ENCODE measurements at regions of chr4 and their contacts with region 1.

Region 1: GRCh38 chr4:170259631-170260153 is 169.9 kb upstream of the AADAT start:
- DNase-seq: peak; percentile 95
- H3K4me3 ChIP-seq: no peak overlapping the region
- H3K27ac ChIP-seq: no peak overlapping the region
- H3K4me1 ChIP-seq: no peaks in the 10 kb centered on the region
- H3K27me3 ChIP-seq: peaks cover 19% of the 10 kb centered on the region
- CTCF ChIP-seq: peak; percentile 99

Region 2: GRCh38 chr4:170138580-170139194 is 121.0 kb before region 1 on chr4:
- CTCF ChIA-PET with region 1: interaction called, 3 read pairs
- POLR2A ChIA-PET with region 1: no interaction called
- intact Hi-C with region 1: loop called (anchors 1 kb)
- DNase-seq: peak; percentile 84
- H3K4me3 ChIP-seq: no peak overlapping the region
- H3K27ac ChIP-seq: no peak overlapping the region
- H3K4me1 ChIP-seq: no peaks in the 10 kb centered on the region
- H3K27me3 ChIP-seq: peaks cover 7% of the 10 kb centered on the region
- CTCF ChIP-seq: peak; percentile 80

Measured in A673 (cell line).